ENCODE measurements at regions of chr20 and their contacts with region 1.

Region 1: GRCh38 chr20:51492167-51493092 is 50.1 kb downstream of the NFATC2 start:
- DNase-seq: no peak

Region 2: GRCh38 chr20:51404298-51405060 is 88.0 kb before region 1 on chr20:
- intact Hi-C with region 1: no loop called
- DNase-seq: no peak

Region 3: DNA sequence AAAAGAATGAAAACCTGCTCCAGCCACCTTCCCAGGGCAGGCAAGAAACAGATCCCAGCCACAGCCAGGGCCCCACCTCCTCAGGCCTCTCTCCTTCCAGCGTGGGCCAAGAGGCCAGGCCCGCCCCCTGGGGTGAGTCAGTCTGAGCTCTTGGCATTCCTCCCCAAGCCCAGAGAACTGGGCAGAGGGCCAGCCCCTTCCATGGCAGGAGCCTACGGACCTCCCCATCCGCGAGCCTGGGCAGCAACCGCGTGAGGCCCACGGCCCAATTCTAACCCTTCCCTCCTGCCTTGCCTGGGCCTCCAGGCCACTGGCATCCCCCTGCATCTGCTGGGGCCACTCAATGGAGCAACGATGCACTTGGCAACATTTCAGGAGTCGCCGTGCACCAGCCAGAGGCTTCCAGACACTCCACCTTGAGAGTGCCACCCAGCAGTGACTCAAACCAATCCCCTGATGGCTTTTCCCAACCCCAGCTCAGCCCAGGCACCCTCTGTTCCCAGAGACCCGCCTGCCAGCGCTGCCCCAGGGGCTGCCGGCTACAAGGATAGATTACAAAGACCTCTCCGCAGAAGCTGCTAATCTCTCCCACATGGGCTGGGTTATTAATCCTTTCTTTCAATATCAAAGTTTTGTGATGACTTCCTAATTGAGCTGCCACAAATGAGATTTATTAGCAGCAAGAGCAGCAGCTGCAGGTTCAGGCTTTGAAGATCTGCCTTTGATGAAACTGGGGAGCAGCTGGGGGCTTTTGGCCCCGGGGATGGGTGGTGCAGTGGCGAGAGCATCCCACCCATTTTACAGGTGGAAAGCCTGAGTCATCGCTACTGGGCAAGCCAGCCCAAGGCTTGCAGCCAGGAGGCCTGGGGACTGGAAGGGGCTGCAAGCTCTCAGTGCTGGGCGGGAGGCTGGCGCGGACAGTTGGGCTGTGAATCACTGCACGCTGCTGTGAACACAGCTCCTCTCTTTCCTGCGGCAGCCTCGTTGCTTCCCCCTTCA is 35.6 kb before region 1 on chr20:
- intact Hi-C with region 1: loop called (anchors 5 kb)
- DNase-seq: peak; percentile 96

Region 4: GRCh38 chr20:51531141-51531710 is 38.8 kb after region 1 on chr20:
- intact Hi-C with region 1: no loop called
- DNase-seq: no peak